Activated T-helper 1 cell treated with anti-CD3 and anti-CD28 coated beads, Interleukin-12 subunit alpha, Interleukin-12 subunit beta, Interleukin-2, Interleukin-4 antibody, amounts not matched to agents 30 ng/mL and 10 ng/mL and 1 ng/mL, durations not matched to agents 14 hours and 24 hours and 36 hours (primary cell): ENCODE measurements at regions of chr14 and their contacts with region 1.

Region 1: GRCh38 chr14:58637391-58638230 is at the start of gene DACT1:
- DNase-seq: peak; percentile 49
- H3K4me3 Mint-ChIP-seq: peak within 1 kb of the TSS; percentile 86
- H3K27ac Mint-ChIP-seq: peak within 1 kb of the TSS; percentile 75
- H3K4me1 Mint-ChIP-seq: peaks cover 35% of the 10 kb centered on the region
- H3K27me3 Mint-ChIP-seq: peaks cover 37% of the 10 kb centered on the region
- total RNA-seq, gene DACT1: 1.6 and 2.3 TPM in 2 replicates

Region 2: GRCh38 chr14:58270628-58271027 is 367.0 kb before region 1 on chr14:
- intact Hi-C with region 1: no loop called
- DNase-seq: no peak
- H3K4me3 Mint-ChIP-seq: no peak overlapping the region
- H3K27ac Mint-ChIP-seq: no peak overlapping the region
- H3K4me1 Mint-ChIP-seq: peaks cover 24% of the 10 kb centered on the region
- H3K27me3 Mint-ChIP-seq: no peaks in the 10 kb centered on the region

Region 3: DNA sequence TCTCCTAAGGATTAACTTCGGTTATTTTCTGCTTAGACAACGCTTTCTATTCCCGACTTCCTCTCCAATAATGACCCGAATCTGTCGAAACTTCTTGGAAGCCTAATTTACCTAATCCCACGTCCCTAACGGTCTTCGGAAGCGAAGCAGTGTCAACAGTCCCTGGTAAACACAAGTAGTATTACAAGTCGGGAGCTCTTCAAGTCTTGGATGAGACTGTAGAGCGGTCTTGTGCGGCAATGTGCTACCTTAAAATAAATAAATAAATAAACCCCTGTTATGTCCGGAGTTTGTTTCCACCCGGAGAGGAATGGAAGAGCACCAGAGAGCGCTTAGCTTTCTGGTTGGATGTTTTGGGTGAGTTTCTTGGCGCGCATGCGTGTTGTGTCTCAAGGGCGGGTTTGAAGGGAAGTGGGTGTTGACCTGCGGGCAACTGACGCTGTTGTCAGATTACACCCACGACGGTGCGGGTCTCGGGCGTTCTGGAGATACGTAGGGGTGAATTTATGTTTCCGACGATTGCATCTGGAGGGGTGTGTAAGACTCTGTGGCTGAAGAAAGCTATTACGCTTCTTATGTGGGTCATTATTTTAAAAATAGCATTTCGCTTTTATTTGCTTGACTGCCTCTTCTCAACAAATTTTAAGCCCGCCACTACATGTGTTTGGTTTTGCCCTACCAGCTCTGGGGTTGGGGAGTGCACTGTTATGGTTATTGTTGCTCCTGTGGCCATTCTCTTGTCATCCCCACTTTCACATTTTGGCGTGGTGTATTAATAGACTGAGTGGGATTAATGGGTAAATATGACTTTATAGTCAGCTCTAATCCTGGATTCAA is 210.1 kb before region 1 on chr14 and contains the starts of genes KIAA0586 and TIMM9:
- intact Hi-C with region 1: loop called (anchors 1 kb)
- DNase-seq: peak; percentile 95
- H3K4me3 Mint-ChIP-seq: peak within 1 kb of the TSS; percentile 86
- H3K27ac Mint-ChIP-seq: peak within 1 kb of the TSS; percentile 96
- H3K4me1 Mint-ChIP-seq: peaks cover 49% of the 10 kb centered on the region
- H3K27me3 Mint-ChIP-seq: no peaks in the 10 kb centered on the region
- total RNA-seq, gene KIAA0586: 19.7 and 19.8 TPM in 2 replicates
- total RNA-seq, gene TIMM9: 66.5 and 67.4 TPM in 2 replicates

Region 4: GRCh38 chr14:58598028-58598803 is 39.4 kb before region 1 on chr14:
- intact Hi-C with region 1: loop called (anchors 2 kb)
- DNase-seq: peak; percentile 8
- H3K4me3 Mint-ChIP-seq: no peak overlapping the region
- H3K27ac Mint-ChIP-seq: no peak overlapping the region
- H3K4me1 Mint-ChIP-seq: peaks cover 36% of the 10 kb centered on the region
- H3K27me3 Mint-ChIP-seq: peaks cover 3% of the 10 kb centered on the region

Region 5: DNA sequence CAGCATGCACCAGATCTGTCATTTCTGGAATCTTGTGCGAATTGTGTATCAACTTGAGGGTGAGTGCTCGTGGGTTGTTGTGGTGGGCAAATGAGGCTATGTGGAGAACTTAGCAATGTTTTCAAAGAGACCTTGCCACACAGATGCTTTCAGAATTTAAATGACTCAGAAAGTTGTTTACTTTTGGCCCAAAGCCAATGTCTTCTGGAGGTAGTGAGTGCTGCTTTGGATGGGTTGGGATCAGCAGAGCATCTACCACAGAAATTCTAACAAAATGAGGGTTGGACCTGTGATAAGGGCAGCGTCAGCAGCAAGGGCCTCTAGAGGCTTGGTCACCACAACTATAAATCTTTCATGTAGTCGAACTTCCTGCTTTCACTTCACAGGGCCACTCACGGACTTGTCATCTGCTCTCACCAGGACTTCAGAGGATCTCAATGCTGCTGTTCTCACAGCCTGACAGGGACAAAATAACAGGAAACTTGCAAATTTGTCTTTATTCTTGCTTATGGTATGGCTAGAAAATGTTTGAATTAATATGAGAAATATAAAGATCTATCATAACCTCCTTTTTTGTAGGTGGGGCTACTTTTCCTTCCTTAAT is 111.6 kb after region 1 on chr14:
- intact Hi-C with region 1: loop called (anchors 1 kb)
- DNase-seq: peak; percentile 14
- H3K4me3 Mint-ChIP-seq: peak overlapping the region; percentile 3
- H3K27ac Mint-ChIP-seq: peak overlapping the region; percentile 5
- H3K4me1 Mint-ChIP-seq: peaks cover 15% of the 10 kb centered on the region
- H3K27me3 Mint-ChIP-seq: peaks cover 3% of the 10 kb centered on the region

Region 6: DNA sequence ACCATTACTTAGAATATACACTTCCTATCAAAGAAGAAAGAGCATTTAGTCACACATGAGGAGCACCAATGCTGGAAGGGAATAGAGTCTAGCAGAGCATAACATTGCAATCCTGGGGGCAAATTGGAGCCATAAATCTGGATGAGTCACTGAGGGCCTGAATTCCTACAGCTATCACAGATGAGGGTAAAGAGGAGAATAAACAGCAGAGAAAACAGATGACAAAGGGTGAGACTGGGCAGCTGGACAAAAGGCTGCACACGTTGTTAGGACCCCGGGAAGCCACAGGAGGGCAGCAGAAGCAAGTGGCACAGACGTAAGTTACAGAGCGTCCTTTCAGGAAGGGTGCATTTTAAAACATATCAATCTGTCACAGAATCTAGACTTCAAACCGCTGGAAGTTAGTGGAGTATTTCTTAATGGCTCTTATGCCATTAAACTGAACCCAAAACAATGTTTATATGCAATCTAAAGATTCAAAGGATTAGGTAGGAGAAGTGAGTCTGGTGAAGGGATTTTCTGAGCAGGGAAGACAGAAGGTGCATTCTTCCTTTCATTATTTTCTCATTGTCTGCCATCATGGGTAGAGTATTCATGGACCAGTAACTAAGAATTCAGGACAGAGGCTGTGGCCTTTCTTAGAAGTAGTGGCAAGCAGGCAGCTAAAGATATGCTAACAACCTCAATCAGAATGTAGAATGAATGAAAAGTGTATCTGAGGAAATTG is 391.0 kb after region 1 on chr14:
- intact Hi-C with region 1: loop called (anchors 2 kb)
- DNase-seq: no peak
- H3K4me3 Mint-ChIP-seq: no peak overlapping the region
- H3K27ac Mint-ChIP-seq: no peak overlapping the region
- H3K4me1 Mint-ChIP-seq: no peaks in the 10 kb centered on the region
- H3K27me3 Mint-ChIP-seq: peaks cover 3% of the 10 kb centered on the region

Region 7: GRCh38 chr14:59483900-59484638 is 846.5 kb after region 1 on chr14 and contains the starts of genes JKAMP and L3HYPDH:
- intact Hi-C with region 1: loop called (anchors 5 kb)
- DNase-seq: peak; percentile 95
- H3K4me3 Mint-ChIP-seq: peak within 1 kb of the TSS; percentile 94
- H3K27ac Mint-ChIP-seq: peak within 1 kb of the TSS; percentile 90
- H3K4me1 Mint-ChIP-seq: peaks cover 61% of the 10 kb centered on the region
- H3K27me3 Mint-ChIP-seq: no peaks in the 10 kb centered on the region
- total RNA-seq, gene JKAMP: 27.6 and 28.8 TPM in 2 replicates
- total RNA-seq, gene L3HYPDH: 14.0 and 15.9 TPM in 2 replicates